PC-3 (cell line): ENCODE measurements at regions of chr9 and their contacts with region 1.

Region 1: GRCh38 chr9:109817846-109818472 is 38.0 kb downstream of the PALM2AKAP2 start:
- DNase-seq: peak; percentile 94
- ATAC-seq: peak; percentile 62
- H3K4me3 ChIP-seq: no peak overlapping the region
- H3K27ac ChIP-seq: peak overlapping the region; percentile 60
- H3K4me1 ChIP-seq: peaks cover 34% of the 10 kb centered on the region
- H3K27me3 ChIP-seq: no peaks in the 10 kb centered on the region
- CTCF ChIP-seq: peak; percentile 87

Region 2: GRCh38 chr9:109574068-109574882 is 243.7 kb before region 1 on chr9:
- CTCF ChIA-PET with region 1: no interaction called
- POLR2A ChIA-PET with region 1: no interaction called
- intact Hi-C with region 1: loop called (anchors 1 kb)
- DNase-seq: peak; percentile 72
- ATAC-seq: peak; percentile 65
- H3K4me3 ChIP-seq: no peak overlapping the region
- H3K27ac ChIP-seq: no peak overlapping the region
- H3K4me1 ChIP-seq: no peaks in the 10 kb centered on the region
- H3K27me3 ChIP-seq: no peaks in the 10 kb centered on the region
- CTCF ChIP-seq: peak; percentile 70

Region 3: DNA sequence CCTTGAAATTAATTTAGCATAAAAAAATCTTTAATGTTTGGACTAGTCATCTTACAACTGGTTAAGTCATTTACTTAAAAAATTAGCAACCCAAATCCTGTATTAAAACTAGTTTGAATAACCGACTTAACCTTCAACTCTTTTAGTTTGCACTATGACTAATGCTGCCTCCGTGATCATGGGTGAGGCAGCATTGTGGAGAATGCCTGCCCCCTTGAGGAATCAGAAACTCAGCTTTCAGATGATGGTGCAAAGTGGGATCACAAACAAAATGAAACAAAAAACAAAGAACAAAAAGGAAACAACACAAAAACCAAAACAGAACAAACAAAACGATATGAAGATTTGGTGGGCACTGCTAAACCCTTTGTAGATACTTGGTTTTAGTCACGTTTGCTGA is 165.0 kb before region 1 on chr9:
- CTCF ChIA-PET with region 1: interaction called, 3 read pairs
- POLR2A ChIA-PET with region 1: no interaction called
- intact Hi-C with region 1: loop called (anchors 1 kb)
- DNase-seq: peak; percentile 76
- ATAC-seq: peak; percentile 82
- H3K4me3 ChIP-seq: 0 out of 2 replicates have a peak overlapping the region, but pooled peaks have one; percentile 2
- H3K27ac ChIP-seq: peak overlapping the region; percentile 63
- H3K4me1 ChIP-seq: peaks cover 20% of the 10 kb centered on the region
- H3K27me3 ChIP-seq: no peaks in the 10 kb centered on the region
- CTCF ChIP-seq: peak; percentile 82

Region 4: GRCh38 chr9:109751253-109751652 is 66.7 kb before region 1 on chr9:
- CTCF ChIA-PET with region 1: interaction called, 3 read pairs
- POLR2A ChIA-PET with region 1: no interaction called
- intact Hi-C with region 1: loop called (anchors 2 kb)
- DNase-seq: peak; percentile 42
- ATAC-seq: peak; percentile 81
- H3K4me3 ChIP-seq: no peak overlapping the region
- H3K27ac ChIP-seq: no peak overlapping the region
- H3K4me1 ChIP-seq: peaks cover 11% of the 10 kb centered on the region; the same call in 1 of the 2 replicates
- H3K27me3 ChIP-seq: no peaks in the 10 kb centered on the region
- CTCF ChIP-seq: no peak

Region 5: DNA sequence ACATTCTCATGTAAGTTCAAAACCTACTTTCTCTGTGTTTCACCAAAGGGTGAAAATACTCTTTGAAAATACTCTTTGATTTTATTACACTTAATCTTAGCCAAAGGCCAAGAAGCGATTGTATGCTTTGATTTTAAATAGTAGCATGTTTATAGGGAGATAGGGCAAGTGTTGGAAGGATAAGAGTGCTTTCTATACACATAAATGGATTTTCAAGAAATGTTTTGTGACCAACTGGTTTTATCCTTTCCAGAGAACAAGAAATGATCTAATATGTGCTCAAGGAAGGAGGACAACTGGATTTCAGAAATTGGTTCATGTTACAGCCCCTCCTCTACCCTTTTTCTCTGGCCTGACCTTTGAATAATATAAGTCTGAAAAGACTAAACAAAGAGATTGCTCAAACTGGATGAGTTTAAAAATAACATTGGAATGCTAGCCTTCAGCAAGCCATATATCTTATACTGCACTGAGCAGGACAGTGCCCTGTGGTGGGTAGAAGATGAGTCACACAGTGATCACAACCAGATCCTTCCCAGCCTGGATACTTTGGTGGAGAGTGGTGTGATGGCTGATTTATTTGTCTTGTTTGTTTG is 24.9 kb before region 1 on chr9:
- CTCF ChIA-PET with region 1: no interaction called
- POLR2A ChIA-PET with region 1: no interaction called
- intact Hi-C with region 1: loop called (anchors 2 kb)
- DNase-seq: peak; percentile 83
- ATAC-seq: peak; percentile 99
- H3K4me3 ChIP-seq: no peak overlapping the region
- H3K27ac ChIP-seq: peak overlapping the region; percentile 51
- H3K4me1 ChIP-seq: peaks cover 22% of the 10 kb centered on the region
- H3K27me3 ChIP-seq: no peaks in the 10 kb centered on the region
- CTCF ChIP-seq: no peak

Region 6: DNA sequence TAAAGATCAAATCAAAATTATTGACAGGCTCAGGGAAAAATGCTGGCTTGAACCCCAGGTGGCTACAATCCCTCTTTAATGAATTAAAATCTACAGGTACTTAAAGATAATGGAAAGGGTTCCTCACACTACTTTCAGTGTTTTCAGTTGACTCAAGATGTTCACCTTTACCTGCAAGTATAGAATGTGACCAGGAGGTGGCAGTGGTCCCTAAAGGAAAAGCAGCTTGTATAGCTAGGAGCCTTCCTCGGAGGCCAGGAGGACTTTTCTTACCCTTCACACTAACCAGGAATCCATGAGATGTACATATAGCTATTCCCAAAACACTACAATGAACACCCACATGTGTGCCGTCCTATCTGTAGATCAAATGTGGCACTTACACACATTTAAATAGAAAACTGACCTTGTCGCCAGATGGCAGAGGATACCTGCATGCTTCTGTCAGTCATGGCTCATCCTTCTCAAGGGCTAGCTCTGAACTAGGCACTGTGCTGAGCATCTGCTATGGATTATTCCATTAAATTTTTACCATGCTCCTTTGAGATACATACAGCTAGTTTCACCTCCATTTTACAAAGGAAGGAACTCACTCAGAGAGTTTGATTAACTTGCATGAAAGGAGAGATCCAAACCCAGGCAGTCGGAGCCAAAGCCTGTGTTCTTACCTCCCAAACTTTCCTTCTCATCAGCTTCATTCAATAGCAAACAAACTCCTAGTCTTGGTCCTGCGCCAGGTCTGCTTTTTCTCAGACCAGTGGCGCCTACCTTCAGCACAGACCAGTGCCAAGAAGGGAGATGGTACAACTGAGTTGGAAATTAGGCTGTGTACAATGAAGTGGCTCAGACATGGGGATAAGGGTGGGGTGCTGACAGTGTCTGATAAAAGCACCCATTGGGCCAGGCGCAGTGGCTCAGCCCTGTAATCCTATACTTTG is 365.5 kb after region 1 on chr9:
- CTCF ChIA-PET with region 1: no interaction called
- POLR2A ChIA-PET with region 1: interaction called, 20 read pairs
- intact Hi-C with region 1: no loop called
- DNase-seq: peak; percentile 80
- ATAC-seq: peak; percentile 66
- H3K4me3 ChIP-seq: no peak overlapping the region
- H3K27ac ChIP-seq: no peak overlapping the region
- H3K4me1 ChIP-seq: peaks cover 20% of the 10 kb centered on the region
- H3K27me3 ChIP-seq: no peaks in the 10 kb centered on the region
- CTCF ChIP-seq: peak; percentile 81